ENCODE measurements at regions of chr11 and their contacts with region 1.

Region 1: DNA sequence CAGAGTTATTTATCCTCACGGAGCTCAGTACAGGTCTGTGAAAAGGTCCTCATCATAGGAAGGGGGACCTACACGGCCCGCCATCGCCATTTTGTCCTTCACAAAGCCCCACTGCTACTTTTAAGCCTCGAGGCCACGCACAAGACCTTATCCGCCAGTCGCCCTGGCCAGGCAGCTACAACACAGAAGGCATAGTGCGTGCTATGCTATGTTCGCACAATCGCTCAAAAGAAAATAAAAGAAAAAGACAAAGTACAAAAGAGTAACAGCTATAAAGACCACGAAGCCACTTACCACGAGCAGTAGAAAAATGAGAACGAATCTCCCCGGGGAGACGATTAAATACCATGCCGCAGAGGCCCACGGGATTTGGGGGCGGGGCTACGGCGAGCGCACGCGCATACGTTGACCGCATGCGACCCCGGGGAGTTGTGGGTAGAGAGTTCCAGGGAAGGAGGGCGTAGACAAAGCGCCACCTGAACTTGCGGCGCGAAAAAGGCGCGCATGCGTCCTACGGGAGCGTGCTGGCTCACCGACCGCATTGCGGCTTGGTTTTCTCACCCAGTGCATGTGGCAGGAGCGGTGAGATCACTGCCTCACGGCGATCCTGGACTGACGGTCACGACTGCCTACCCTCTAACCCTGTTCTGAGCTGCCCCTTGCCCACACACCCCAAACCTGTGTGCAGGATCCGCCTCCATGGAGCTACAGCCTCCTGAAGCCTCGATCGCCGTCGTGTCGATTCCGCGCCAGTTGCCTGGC is 16.4 kb upstream of the WDR74 start:
- DNase-seq: peak; percentile 93 to 99 (median 96)
- ATAC-seq: peak; percentile 89 to 94 (median 92)
- H3K4me3 ChIP-seq: peak overlapping the region; percentile 81 to 100
- H3K4me3 Mint-ChIP-seq: peak overlapping the region; percentile 93 to 98 (median 97)
- H3K27ac ChIP-seq: peak overlapping the region; percentile 62
- H3K27ac Mint-ChIP-seq: peak overlapping the region; percentile 94 to 96
- H3K4me1 ChIP-seq: peaks cover 32 to 37% of the 10 kb centered on the region in 2 experiments
- H3K4me1 Mint-ChIP-seq: peaks cover 45 to 65% (median 63%) of the 10 kb centered on the region in 3 donors
- H3K27me3 ChIP-seq: no peaks in the 10 kb centered on the region
- H3K27me3 Mint-ChIP-seq: no peaks in the 10 kb centered on the region

Region 2: GRCh38 chr11:62505440-62506091 is 350.2 kb before region 1 on chr11:
- CTCF ChIA-PET with region 1: no interaction called
- POLR2A ChIA-PET with region 1: interaction called in 1 of 2 experiments, 11 read pairs
- DNase-seq: no peak
- ATAC-seq: no peak
- H3K4me3 ChIP-seq: no peak overlapping the region
- H3K4me3 Mint-ChIP-seq: no peak overlapping the region
- H3K27ac ChIP-seq: no peak overlapping the region
- H3K27ac Mint-ChIP-seq: no peak overlapping the region
- H3K4me1 ChIP-seq: no peaks in the 10 kb centered on the region
- H3K4me1 Mint-ChIP-seq: peaks cover 0 to 11% (median 6%) of the 10 kb centered on the region in 3 donors
- H3K27me3 ChIP-seq: peaks cover 0 to 5% of the 10 kb centered on the region in 2 experiments
- H3K27me3 Mint-ChIP-seq: peaks cover 6 to 9% of the 10 kb centered on the region in 2 donors

Region 3: DNA sequence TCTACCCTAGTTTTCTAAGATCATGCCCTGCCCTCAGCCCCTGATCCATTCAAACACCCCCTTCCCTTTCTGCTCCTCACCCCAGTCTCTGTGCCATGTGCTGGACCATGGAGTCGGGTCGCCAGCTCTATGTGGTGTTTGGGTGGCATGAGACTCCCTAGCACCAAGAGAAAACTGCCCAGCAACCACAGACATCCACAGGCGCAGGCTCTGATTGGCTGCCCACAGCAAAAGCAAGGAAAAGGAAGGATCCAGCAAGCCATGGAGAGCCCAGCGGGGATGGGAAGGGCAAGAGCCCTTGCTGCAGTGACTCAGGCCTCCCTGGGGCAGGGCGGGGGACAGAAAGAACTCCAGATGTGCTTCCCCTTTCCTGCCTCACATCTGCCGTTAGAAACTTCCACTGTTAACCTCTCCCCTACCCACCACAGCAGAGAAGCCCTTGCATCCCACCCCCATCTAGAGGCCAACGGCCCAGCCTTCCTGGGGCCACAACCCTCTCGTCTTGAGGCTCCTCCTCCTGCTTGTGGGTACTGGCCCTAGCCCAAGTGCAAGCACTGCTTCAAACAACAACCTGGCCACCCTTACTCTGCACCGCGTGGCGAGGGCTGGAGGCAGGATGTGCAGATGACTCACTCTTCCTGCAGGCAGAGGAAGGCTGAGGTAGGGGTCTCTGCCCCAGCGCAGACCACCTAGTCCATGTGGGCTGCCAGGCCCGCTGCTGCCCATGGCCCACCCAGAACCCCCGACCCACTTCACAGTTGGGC is 299.5 kb before region 1 on chr11:
- CTCF ChIA-PET with region 1: no interaction called
- POLR2A ChIA-PET with region 1: interaction called in 1 of 2 experiments, 10 read pairs
- DNase-seq: peak; percentile 65 to 91 (median 80)
- ATAC-seq: peak; percentile 53 to 79 (median 76)
- H3K4me3 ChIP-seq: peak overlapping the region in 1 of 2 donors; percentile 37
- H3K4me3 Mint-ChIP-seq: peak overlapping the region; percentile 71 to 82 (median 77)
- H3K27ac ChIP-seq: peak overlapping the region; percentile 98
- H3K27ac Mint-ChIP-seq: peak overlapping the region; percentile 97 to 99
- H3K4me1 ChIP-seq: peaks cover 51 to 97% of the 10 kb centered on the region in 2 experiments
- H3K4me1 Mint-ChIP-seq: peaks cover 90 to 96% (median 91%) of the 10 kb centered on the region in 3 donors
- H3K27me3 ChIP-seq: no peaks in the 10 kb centered on the region
- H3K27me3 Mint-ChIP-seq: no peaks in the 10 kb centered on the region

Region 4: DNA sequence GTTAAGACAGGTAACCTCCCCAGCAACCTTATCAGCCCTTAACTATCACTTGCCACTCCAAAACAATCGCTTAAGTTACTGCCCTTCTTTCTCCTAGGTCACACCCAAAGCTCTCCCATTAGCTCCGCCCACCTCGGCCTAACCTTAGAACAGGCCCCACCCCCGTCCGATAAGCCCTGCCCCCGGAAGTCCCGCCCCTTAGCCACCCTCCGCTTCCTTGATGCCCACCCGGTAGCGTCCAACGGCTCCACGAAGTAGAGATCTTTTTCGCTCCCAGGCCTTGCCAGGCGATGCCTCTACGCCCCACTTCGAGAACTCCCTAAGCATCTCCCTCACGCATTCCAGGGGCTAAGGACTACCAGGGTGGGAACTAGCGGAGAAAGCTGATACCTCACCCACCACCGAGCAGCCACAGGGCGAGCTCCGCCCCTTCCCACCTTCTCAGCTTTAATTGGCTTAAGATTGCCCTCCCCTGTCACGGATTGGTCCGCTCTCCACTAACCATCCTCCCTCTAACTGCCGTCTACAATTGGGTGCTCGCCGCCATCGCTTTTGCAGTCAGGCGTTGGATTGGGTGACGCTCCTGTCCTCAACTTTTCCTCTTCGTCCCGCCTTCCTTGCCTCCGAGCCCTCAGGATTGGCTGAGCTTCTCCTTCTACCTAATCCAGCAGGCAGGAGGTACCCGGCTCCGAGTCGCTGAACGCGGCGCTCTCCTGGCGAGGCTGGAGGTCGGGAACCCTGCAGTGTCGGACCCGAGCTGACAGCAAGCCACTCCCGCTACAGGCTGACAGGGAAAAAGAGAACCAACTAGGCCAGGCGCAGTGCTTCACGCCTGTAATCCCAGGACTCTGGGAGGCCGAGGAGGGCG is 101.8 kb before region 1 on chr11 and contains the start of gene ZBTB3:
- CTCF ChIA-PET with region 1: interaction called, 5 to 9 read pairs
- POLR2A ChIA-PET with region 1: interaction called in 1 of 2 experiments, 20 read pairs
- DNase-seq: peak; percentile 92 to 99 (median 96)
- ATAC-seq: peak; percentile 94 to 95 (median 95)
- H3K4me3 ChIP-seq: peak within 1 kb of the TSS; percentile 81 to 88
- H3K4me3 Mint-ChIP-seq: peak within 1 kb of the TSS; percentile 83 to 97 (median 91)
- H3K27ac ChIP-seq: peak within 1 kb of the TSS; percentile 76
- H3K27ac Mint-ChIP-seq: peak within 1 kb of the TSS; percentile 96 to 99
- H3K4me1 ChIP-seq: peaks cover 4 to 37% of the 10 kb centered on the region in 2 experiments
- H3K4me1 Mint-ChIP-seq: peaks cover 15 to 30% (median 28%) of the 10 kb centered on the region in 3 donors
- H3K27me3 ChIP-seq: no peaks in the 10 kb centered on the region
- H3K27me3 Mint-ChIP-seq: no peaks in the 10 kb centered on the region
- total RNA-seq, gene ZBTB3: 5.9 to 24.6 (median 22.9) TPM

Region 5: GRCh38 chr11:62831520-62832335 is 24.0 kb before region 1 on chr11 and contains the start of gene STX5:
- CTCF ChIA-PET with region 1: interaction called in 1 of 2 experiments, 3 read pairs
- POLR2A ChIA-PET with region 1: interaction called, 3 to 19 read pairs
- DNase-seq: peak; percentile 97 to 100 (median 100)
- ATAC-seq: peak; percentile 89 to 97 (median 94)
- H3K4me3 ChIP-seq: peak within 1 kb of the TSS; percentile 96 to 97
- H3K4me3 Mint-ChIP-seq: peak within 1 kb of the TSS; percentile 94 to 99 (median 97)
- H3K27ac ChIP-seq: peak within 1 kb of the TSS; percentile 95
- H3K27ac Mint-ChIP-seq: peak within 1 kb of the TSS; percentile 98 to 99
- H3K4me1 ChIP-seq: peaks cover 13 to 42% of the 10 kb centered on the region in 2 experiments
- H3K4me1 Mint-ChIP-seq: peaks cover 41 to 52% (median 48%) of the 10 kb centered on the region in 3 donors
- H3K27me3 ChIP-seq: no peaks in the 10 kb centered on the region
- H3K27me3 Mint-ChIP-seq: no peaks in the 10 kb centered on the region
- total RNA-seq, gene STX5: 49.3 to 132 (median 58.0) TPM

Region 6: DNA sequence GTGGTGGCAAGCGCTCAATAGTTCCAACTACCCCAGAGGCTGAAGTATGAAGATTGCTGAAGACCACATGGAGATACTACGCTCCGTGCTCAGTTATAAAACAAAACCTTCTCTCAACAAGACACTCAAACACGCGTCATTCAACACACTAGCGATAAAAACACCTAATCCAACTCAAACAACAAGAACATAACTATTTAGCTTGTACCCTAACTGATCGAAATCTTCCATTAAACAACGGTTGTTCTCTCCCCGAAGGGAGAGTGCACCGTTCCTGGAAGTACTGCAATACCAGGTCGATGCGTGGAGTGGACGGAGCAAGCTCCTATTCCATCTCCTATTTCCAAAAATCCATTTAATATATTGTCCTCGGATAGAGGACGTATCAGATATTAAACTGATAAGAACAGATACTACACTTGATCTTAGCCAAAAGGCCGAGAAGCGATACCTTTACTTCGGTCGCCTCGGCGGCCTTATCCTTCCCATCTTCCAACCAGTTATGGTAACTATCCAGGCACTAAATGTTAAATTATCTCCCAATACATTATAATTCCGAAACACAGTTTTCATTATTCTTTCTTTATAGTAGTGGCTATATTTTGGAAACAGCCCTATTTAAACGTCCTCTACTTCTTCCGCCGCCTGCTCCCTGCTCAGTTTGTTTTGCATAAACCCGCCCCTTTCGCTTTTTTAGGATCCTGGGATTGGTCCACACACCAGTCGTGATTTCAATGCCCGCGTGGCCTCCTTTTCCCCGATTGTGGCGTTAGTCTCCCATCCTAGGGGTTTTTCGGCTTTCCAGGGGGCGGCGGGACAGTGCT is 14.2 kb before region 1 on chr11:
- CTCF ChIA-PET with region 1: interaction called in 1 of 2 experiments, 19 read pairs
- POLR2A ChIA-PET with region 1: interaction called, 9 to 71 read pairs
- DNase-seq: peak; percentile 59 to 92 (median 83)
- ATAC-seq: peak; percentile 56 to 65 (median 60)
- H3K4me3 ChIP-seq: peak overlapping the region; percentile 54 to 91
- H3K4me3 Mint-ChIP-seq: no peak overlapping the region
- H3K27ac ChIP-seq: peak overlapping the region; percentile 100
- H3K27ac Mint-ChIP-seq: no peak overlapping the region
- H3K4me1 ChIP-seq: peaks cover 4 to 41% of the 10 kb centered on the region in 2 experiments
- H3K4me1 Mint-ChIP-seq: peaks cover 15 to 22% (median 19%) of the 10 kb centered on the region in 3 donors
- H3K27me3 ChIP-seq: no peaks in the 10 kb centered on the region
- H3K27me3 Mint-ChIP-seq: no peaks in the 10 kb centered on the region

Measured in T-cell (primary cell).